ENCODE measurements at regions of chr16 and their contacts with region 1.

Region 1: GRCh38 chr16:50152807-50153452 is at the start of gene TENT4B:
- DNase-seq: peak; percentile 89 to 90
- ATAC-seq: peak; percentile 93 to 97 (median 95)
- H3K4me3 ChIP-seq: peak within 1 kb of the TSS; percentile 58 to 98 (median 82)
- H3K27ac ChIP-seq: peak within 1 kb of the TSS; percentile 92 to 98 (median 96)
- H3K4me1 ChIP-seq: peaks cover 0 to 41% (median 29%) of the 10 kb centered on the region in 9 donors
- H3K27me3 ChIP-seq: no peaks in the 10 kb centered on the region
- CTCF ChIP-seq: no peak
- total RNA-seq, gene TENT4B: 4.4 to 8.6 (median 7.1) TPM

Region 2: GRCh38 chr16:50065624-50066481 is 87.1 kb before region 1 on chr16 and contains the start of gene HEATR3:
- intact Hi-C with region 1: loop called in 5 of 10 experiments (anchors 5 kb)
- DNase-seq: peak; percentile 92 to 96
- ATAC-seq: peak; percentile 94 to 98 (median 96)
- H3K4me3 ChIP-seq: peak within 1 kb of the TSS; percentile 70 to 100 (median 92)
- H3K27ac ChIP-seq: peak within 1 kb of the TSS; percentile 87 to 100 (median 96)
- H3K4me1 ChIP-seq: peaks cover 11 to 32% (median 25%) of the 10 kb centered on the region in 9 donors
- H3K27me3 ChIP-seq: no peaks in the 10 kb centered on the region
- CTCF ChIP-seq: peak in 1 of 9 donors; percentile 14
- total RNA-seq, gene HEATR3: 8.7 to 15.8 (median 11.2) TPM

Region 3: GRCh38 chr16:50195276-50195675 is 42.3 kb after region 1 on chr16:
- intact Hi-C with region 1: loop called in 2 of 10 experiments (anchors 1 to 10 kb)
- DNase-seq: no peak
- ATAC-seq: peak in 2 of 8 donors; percentile 46 to 53
- H3K4me3 ChIP-seq: no peak overlapping the region
- H3K27ac ChIP-seq: peak overlapping the region in 3 of 10 donors; percentile 1 to 66 (median 54)
- H3K4me1 ChIP-seq: peaks cover 0 to 46% (median 23%) of the 10 kb centered on the region in 9 donors
- H3K27me3 ChIP-seq: no peaks in the 10 kb centered on the region
- CTCF ChIP-seq: no peak

Region 4: DNA sequence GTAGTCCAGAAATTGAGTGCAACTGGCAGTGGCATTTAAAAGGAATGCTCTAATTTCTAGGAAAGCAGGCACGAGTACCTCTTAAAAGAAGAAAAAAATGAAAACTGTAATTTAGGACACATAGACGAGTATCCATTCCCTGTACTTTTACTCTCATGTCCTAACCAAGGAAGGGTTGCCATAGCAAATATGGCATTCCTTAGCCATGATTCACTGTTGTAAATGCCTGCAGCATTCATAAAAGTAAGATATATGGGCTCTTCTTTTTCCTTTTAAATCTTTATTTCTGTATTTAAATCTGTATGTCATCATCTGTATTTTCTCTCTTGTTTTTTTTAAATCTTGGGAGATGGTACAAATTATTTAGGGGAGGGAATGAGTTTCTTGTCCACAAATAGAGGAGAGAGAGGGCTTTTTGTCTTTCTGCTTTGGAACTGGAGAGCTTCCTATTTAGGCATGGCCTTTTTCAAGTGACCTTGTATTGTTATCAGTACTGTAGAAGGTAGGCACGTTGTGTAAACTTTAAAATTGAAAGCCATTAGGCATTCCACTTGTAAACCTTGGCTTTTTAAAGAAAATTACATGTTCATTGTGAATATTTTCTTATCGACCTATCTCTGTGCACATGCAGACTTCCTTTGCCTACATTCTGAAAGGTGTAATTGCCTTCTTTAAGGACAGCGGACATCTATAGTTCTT is 50.1 kb after region 1 on chr16:
- intact Hi-C with region 1: loop called in 3 of 10 experiments (anchors 2 to 10 kb)
- DNase-seq: no peak
- ATAC-seq: peak in 6 of 8 donors; percentile 43 to 71 (median 56)
- H3K4me3 ChIP-seq: no peak overlapping the region
- H3K27ac ChIP-seq: peak overlapping the region in 8 of 10 donors; percentile 34 to 67 (median 37)
- H3K4me1 ChIP-seq: peaks cover 11 to 71% (median 51%) of the 10 kb centered on the region in 9 donors
- H3K27me3 ChIP-seq: no peaks in the 10 kb centered on the region
- CTCF ChIP-seq: no peak

Region 5: DNA sequence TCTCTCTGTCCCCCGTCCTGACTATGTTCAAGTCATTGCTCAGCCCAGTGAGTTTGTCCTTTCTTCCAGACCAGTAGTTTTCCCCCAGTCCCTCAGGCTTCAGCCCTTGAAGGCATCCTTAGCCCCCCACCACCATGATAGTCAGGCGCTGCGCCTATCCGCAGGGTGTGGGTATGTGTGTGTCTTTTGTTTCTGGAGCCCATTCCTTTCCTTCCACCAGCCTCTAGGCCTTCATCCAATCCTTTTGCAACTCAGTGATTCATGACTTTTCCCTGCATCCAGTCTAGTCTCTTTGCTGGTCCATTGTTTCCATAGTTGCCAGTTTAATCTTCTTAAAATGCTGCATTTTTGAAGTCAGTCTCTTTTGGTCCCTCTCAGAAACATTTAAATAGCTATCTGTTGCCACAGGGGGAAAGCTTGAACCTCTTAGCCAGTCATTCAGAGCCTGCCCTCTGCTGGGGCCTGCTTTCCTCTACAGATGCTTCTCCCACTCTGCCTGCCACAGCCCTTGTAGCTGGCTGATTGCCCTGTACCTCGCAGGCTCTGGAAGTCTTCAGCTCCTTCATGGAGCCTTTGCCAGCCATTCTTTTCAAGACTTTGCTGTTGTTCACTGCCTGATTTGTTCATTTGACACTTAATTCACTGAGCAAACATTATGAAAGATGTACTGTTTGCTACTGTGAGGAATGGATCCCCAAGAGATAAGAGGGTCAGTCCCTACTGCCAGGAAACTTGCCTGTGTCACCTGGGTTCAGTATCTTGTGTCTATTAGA is 57.5 kb after region 1 on chr16:
- intact Hi-C with region 1: loop called in 7 of 10 experiments (anchors 2 to 10 kb)
- DNase-seq: peak; percentile 72 to 82
- ATAC-seq: peak; percentile 86 to 95 (median 92)
- H3K4me3 ChIP-seq: no peak overlapping the region
- H3K27ac ChIP-seq: peak overlapping the region in 2 of 10 donors; percentile 9 to 39
- H3K4me1 ChIP-seq: peaks cover 7 to 51% (median 33%) of the 10 kb centered on the region in 9 donors
- H3K27me3 ChIP-seq: no peaks in the 10 kb centered on the region
- CTCF ChIP-seq: peak; percentile 41 to 90 (median 74)

Region 6: GRCh38 chr16:50520451-50521245 is 367.7 kb after region 1 on chr16:
- intact Hi-C with region 1: no loop called
- DNase-seq: no peak
- ATAC-seq: no peak
- H3K4me3 ChIP-seq: no peak overlapping the region
- H3K27ac ChIP-seq: no peak overlapping the region
- H3K4me1 ChIP-seq: no peaks in the 10 kb centered on the region
- H3K27me3 ChIP-seq: peaks cover 0 to 40% (median 26%) of the 10 kb centered on the region in 7 donors
- CTCF ChIP-seq: no peak

Measured in heart right ventricle (tissue), 16 donors.